ENCODE measurements at regions of chr6 and their contacts with region 1.

Region 1: DNA sequence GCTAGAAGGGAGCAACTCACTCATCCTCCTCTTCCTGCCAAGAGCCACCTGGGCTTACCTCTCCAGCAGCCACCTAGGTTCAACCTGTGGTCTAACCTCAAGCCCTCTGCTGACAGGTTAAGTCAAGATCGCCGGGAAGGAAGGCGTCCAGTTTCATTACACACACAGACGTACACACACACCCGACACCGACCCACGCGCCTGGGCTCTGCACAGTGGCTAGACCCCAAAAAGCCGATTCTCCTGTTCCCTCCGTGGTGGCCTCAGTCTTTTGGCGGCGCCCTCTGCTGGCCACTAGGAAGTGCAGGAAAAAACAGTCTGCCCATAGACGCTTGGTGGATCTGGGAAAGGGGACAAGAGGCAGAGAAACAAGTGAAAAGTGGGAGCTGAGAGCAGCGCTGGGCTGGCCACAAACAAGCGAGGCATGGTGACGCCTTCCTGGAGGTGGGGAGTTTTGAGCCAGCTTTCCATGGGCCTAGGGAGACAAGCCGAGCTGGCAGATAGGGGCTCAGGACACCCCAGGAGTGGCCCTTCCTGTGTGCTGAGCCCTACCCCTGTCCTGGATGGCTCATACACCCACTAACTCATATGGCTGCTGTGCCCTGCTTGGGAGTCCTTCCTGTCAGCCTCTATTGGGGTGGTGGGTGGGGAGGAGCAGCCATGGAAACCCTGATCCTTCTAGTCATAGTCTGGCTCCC is 52.7 kb downstream of the MRPL14 start:
- DNase-seq: no peak
- H3K27ac ChIP-seq: peak overlapping the region; percentile 65
- CTCF ChIP-seq: peak; percentile 90

Region 2: DNA sequence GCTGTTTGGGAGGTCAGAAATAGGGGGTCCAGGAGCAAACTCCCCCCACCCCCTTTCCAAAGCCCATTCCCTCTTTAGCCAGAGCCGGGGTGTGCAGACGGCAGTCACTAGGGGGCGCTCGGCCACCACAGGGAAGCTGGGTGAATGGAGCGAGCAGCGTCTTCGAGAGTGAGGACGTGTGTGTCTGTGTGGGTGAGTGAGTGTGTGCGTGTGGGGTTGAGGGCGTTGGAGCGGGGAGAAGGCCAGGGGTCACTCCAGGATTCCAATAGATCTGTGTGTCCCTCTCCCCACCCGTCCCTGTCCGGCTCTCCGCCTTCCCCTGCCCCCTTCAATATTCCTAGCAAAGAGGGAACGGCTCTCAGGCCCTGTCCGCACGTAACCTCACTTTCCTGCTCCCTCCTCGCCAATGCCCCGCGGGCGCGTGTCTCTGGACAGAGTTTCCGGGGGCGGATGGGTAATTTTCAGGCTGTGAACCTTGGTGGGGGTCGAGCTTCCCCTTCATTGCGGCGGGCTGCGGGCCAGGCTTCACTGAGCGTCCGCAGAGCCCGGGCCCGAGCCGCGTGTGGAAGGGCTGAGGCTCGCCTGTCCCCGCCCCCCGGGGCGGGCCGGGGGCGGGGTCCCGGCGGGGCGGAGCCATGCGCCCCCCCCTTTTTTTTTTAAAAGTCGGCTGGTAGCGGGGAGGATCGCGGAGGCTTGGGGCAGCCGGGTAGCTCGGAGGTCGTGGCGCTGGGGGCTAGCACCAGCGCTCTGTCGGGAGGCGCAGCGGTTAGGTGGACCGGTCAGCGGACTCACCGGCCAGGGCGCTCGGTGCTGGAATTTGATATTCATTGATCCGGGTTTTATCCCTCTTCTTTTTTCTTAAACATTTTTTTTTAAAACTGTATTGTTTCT is 304.8 kb before region 1 on chr6 and contains the start of gene VEGFA:
- CTCF ChIA-PET with region 1: interaction called, 37 read pairs
- POLR2A ChIA-PET with region 1: interaction called, 6 read pairs
- DNase-seq: peak; percentile 98
- H3K27ac ChIP-seq: peak within 1 kb of the TSS; percentile 93
- CTCF ChIP-seq: peak; percentile 98

Region 3: DNA sequence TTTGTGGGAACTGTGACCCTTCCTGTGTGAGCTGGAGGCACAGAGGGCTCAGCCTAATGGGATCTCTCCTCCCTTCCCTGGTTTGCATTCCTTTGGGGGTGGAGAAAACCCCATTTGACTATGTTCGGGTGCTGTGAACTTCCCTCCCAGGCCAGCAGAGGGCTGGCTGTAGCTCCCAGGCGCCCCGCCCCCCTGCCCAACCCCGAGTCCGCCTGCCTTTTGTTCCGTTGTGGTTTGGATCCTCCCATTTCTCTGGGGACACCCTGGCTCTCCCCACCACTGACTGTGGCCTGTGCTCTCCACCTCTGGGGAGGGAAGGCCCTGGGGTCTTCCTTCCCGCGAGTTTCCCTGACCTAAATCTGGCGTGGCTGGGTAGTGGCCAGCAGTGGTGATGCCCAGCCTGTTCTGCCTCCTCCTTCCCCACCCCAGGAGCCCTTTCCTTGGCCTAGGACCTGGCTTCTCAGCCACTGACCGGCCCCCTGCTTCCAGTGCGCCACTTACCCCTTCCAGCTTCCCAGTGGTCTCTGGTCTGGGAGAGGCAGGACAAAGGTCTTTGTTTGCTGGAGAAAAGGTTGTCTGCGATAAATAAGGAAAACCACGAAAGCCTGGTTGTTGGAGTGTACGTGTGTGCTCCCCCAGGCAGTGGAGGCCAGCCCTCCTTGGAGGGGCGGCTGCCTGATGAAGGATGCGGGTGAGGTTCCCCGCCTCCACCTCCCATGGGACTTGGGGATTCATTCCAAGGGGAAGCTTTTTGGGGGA is 299.6 kb before region 1 on chr6:
- CTCF ChIA-PET with region 1: interaction called, 37 read pairs
- POLR2A ChIA-PET with region 1: interaction called, 6 read pairs
- DNase-seq: peak; percentile 93
- H3K27ac ChIP-seq: peak overlapping the region; percentile 93
- CTCF ChIP-seq: peak; percentile 88

Measured in RWPE1 (cell line).